Colonic mucosa (tissue), 4 donors: ENCODE measurements at regions of chr1 and their contacts with region 1.

Region 1: GRCh38 chr1:196660852-196661251 is 9.0 kb downstream of the CFH start:
- DNase-seq: no peak
- H3K4me3 ChIP-seq: no peak overlapping the region
- H3K27ac ChIP-seq: no peak overlapping the region
- H3K4me1 ChIP-seq: no peaks in the 10 kb centered on the region
- H3K27me3 ChIP-seq: no peaks in the 10 kb centered on the region
- CTCF ChIP-seq: peak; percentile 26

Region 2: GRCh38 chr1:196148367-196148970 is 512.4 kb before region 1 on chr1:
- intact Hi-C with region 1: loop called (anchors 5 kb)
- DNase-seq: no peak
- H3K4me3 ChIP-seq: no peak overlapping the region
- H3K27ac ChIP-seq: no peak overlapping the region
- H3K4me1 ChIP-seq: no peaks in the 10 kb centered on the region
- H3K27me3 ChIP-seq: no peaks in the 10 kb centered on the region
- CTCF ChIP-seq: peak; percentile 64

Region 3: DNA sequence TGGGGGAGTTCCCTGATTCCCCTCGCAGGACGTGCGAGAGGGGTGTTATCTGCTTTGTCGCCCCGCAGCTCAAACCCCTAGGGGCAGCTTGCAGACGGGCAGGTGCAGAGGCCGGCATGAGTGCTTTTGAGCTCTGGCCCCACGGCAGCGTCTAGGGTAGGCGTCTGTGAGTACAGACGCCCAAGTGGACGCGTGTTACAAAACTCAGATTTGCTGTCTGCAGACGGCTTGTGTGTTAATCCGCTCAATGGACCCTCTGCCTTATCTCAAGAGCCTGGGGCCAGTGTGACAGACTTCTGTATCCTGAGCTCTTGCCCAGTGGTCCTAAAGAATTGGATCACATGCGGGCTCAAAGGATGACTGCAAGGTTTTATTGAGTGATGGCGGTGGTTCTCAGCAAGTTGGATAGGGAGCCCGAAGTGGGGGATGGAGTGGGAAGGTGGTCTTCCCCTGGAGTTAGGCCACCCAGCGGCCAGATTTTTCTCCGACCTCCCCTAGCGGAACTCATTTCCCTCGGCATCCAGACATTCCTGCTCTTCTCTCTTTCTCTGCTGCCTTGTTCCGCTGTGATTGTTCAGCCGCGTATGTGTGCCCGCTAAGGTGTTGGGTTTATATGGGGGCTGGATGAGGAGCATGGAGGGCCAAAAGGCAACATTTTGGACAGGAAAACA is 236.4 kb after region 1 on chr1:
- intact Hi-C with region 1: no loop called
- DNase-seq: no peak
- H3K4me3 ChIP-seq: no peak overlapping the region
- H3K27ac ChIP-seq: no peak overlapping the region
- H3K4me1 ChIP-seq: no peaks in the 10 kb centered on the region
- H3K27me3 ChIP-seq: no peaks in the 10 kb centered on the region
- CTCF ChIP-seq: no peak